Right ventricle myocardium inferior (tissue), 1 donor: ENCODE measurements at regions of chr13 and their contacts with region 1.

Region 1: GRCh38 chr13:32164622-32165268 is 133.2 kb downstream of the FRY start:
- DNase-seq: peak; percentile 59
- ATAC-seq: no peak

Region 2: DNA sequence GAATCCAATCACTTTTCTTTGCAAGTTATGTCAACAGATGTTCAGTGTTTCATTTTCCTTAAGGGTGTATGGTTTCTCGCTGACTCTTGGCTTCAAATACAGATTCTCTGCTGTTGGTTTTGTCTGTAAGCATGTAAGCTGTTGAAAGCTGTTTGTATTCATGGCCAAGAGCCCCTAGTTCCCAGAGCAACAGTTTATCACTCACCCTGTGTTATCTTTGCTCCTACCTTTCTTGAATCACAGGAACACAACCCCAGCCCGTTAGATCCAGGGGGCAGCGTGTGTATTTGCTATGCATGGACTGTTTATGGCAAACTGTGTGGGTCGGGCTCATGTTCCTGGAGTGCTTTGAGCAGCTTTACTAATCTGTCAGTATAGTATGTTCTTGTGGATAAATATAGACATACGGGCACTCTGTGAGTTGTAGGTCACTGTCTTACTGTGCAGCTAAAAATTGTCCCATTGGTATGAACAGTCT is 104.3 kb before region 1 on chr13:
- intact Hi-C with region 1: loop called (anchors 5 kb)
- DNase-seq: no peak
- ATAC-seq: peak; percentile 94

Region 3: DNA sequence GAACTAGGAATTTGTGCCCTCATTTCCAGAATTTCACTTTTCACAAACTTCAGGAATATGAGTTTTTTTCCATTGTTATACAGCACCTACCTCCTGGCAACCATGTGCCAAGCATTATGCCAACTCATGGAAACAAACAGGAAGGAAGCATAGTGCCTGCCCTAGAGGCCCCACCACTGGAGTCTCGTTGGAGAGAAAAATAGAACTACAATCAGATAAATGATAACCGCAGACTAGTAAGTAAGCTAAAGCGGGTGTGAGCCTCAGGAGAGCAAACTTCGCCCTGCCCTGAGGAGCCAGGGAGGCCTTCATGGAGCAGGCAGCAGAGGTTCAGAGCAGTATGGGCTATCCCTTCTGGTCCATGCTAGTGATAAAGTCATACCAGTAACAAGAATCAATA is 57.3 kb before region 1 on chr13:
- intact Hi-C with region 1: no loop called
- DNase-seq: peak; percentile 33
- ATAC-seq: peak; percentile 10

Region 4: DNA sequence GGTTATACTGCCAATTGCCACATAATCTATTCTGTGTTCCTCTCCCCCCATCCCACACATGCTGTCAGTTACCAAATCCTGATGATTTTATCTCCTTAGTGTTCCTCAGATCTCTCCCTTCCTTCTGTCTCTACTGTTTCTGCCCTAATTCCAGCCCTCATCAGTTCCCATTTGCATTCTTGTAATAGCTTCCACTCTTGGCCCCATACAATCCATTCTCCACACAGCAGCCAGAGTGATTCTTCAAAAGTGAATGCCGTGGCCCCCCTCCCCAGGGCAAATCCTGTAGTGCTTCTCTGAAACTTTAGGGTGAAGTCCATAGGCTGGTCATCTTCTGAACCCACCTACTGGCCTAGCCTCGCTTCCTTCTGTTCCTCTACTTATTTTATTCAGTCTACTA is 36.0 kb after region 1 on chr13:
- intact Hi-C with region 1: loop called (anchors 5 kb)
- DNase-seq: no peak
- ATAC-seq: no peak